Uterus (tissue), 4 donors: ENCODE measurements at regions of chr18 and their contacts with region 1.

Region 1: DNA sequence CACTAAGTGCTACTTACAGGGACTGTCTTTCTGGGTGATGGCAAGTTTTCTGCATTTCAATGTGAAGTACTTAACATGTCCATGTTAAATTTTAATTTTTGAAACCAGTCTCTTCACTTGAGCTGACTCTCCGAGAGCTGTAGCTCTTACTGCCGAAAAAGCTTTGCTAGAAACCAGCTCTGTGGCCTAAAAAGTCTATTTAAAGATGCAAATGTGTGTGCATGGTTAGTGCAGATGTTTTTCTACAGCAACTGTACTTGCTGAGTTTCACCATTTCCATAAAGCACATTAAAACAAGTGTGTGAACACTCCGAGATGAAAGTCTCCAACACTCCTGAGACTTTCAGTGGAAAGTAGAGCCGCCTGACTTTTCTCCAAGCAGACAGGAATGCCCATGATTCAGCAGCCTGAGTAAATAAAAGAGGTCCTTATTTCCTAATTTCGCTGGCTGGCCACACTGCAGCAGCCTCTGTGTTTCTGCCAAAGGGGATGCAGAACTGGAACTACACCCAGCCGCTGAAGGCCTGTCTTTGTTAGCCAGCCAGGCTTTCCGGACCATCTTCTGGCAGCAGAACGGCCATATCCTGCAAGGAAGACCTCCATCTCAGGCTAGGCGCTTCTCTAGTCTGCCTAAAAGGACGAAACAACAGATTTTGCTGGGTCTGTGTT is 121.2 kb downstream of the ZNF521 start:
- DNase-seq: peak; percentile 85 to 92
- H3K4me3 ChIP-seq: no peak overlapping the region
- H3K27ac ChIP-seq: peak overlapping the region; percentile 71 to 85
- H3K4me1 ChIP-seq: peaks cover 0 to 7% of the 10 kb centered on the region in 2 donors
- H3K27me3 ChIP-seq: no peaks in the 10 kb centered on the region
- CTCF ChIP-seq: no peak
- POLR2A ChIP-seq: no peak

Region 2: DNA sequence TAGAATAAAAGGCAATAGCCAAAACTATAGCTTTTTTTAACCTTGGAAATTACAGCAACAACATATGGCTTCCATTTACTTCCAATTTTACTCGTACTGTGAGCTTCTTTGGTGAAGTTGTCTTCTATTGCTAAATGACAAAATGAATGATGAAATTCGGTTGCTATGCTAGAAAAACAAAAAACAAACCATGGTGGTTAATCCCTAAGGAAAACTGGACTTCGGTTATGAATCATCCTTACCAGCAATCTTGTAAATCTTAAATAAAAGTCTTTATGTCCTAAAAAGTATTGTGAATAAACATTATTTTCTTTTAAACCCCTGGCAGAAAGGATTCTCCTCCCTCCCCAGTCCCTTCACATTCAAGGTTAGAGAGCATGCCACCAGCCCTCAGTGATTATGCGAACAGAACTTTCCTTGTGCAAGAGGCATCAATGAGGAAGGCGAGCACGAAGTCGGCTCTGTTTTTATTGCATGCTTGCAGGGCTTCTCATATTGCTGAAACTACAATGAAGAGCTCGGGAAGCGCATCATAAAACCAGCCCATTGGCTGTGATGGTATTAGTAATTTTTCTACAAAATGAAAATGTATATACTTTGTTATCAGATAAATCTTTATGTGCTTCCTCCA is 58.3 kb after region 1 on chr18:
- intact Hi-C with region 1: loop called (anchors 10 kb)
- DNase-seq: peak; percentile 44 to 48
- H3K4me3 ChIP-seq: no peak overlapping the region
- H3K27ac ChIP-seq: peak overlapping the region; percentile 50
- H3K4me1 ChIP-seq: no peaks in the 10 kb centered on the region
- H3K27me3 ChIP-seq: no peaks in the 10 kb centered on the region
- CTCF ChIP-seq: no peak
- POLR2A ChIP-seq: no peak

Region 3: GRCh38 chr18:25349131-25349925 is 118.5 kb after region 1 on chr18:
- intact Hi-C with region 1: loop called (anchors 10 kb)
- DNase-seq: peak; percentile 44 to 46
- H3K4me3 ChIP-seq: peak overlapping the region; percentile 55 to 60
- H3K27ac ChIP-seq: peak overlapping the region; percentile 95
- H3K4me1 ChIP-seq: no peaks in the 10 kb centered on the region
- H3K27me3 ChIP-seq: no peaks in the 10 kb centered on the region
- CTCF ChIP-seq: no peak
- POLR2A ChIP-seq: peak in 1 of 2 donors; percentile 47

Region 4: GRCh38 chr18:25365242-25365641 is 134.4 kb after region 1 on chr18:
- intact Hi-C with region 1: no loop called
- DNase-seq: no peak
- H3K4me3 ChIP-seq: no peak overlapping the region
- H3K27ac ChIP-seq: no peak overlapping the region
- H3K4me1 ChIP-seq: no peaks in the 10 kb centered on the region
- H3K27me3 ChIP-seq: no peaks in the 10 kb centered on the region
- CTCF ChIP-seq: no peak
- POLR2A ChIP-seq: no peak